Calu3 (cell line): ENCODE measurements at regions of chr4 and their contacts with region 1.

Region 1: GRCh38 chr4:13907255-13907751 is 279.8 kb upstream of the BOD1L1 start:
- DNase-seq: peak; percentile 43
- H3K4me3 Mint-ChIP-seq: peak overlapping the region; percentile 39
- H3K27ac Mint-ChIP-seq: peak overlapping the region; percentile 89
- H3K4me1 Mint-ChIP-seq: peaks cover 22% of the 10 kb centered on the region
- H3K27me3 Mint-ChIP-seq: no peaks in the 10 kb centered on the region
- CTCF ChIP-seq: peak; percentile 15

Region 2: DNA sequence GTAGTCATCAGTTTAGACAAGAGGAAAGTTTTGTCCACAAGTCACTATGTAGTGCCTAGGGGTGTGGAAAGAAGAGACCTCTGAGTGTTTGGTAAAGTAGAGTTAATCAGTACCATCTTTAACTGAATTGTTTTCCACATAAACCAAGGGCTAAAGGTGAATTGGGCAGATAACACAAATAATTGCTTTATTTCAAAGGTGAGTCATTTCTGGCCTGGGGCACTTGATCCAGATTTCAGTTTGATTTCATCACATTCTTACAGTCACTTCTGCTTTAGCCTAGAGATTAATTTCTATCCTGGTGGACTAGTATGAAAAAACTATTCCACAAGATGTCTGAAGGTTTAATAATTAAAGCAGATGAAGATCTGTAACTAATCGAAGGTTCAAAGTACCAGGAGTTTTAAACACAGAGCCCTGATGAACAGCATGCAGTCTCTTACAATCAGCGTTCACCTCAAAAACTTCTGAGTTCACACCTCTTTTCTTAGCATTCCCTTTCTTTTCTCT is 205.3 kb before region 1 on chr4:
- CTCF ChIA-PET with region 1: no interaction called
- intact Hi-C with region 1: loop called (anchors 5 kb)
- DNase-seq: peak; percentile 47
- H3K4me3 Mint-ChIP-seq: peak overlapping the region; percentile 30
- H3K27ac Mint-ChIP-seq: peak overlapping the region; percentile 85
- H3K4me1 Mint-ChIP-seq: peaks cover 32% of the 10 kb centered on the region
- H3K27me3 Mint-ChIP-seq: no peaks in the 10 kb centered on the region
- CTCF ChIP-seq: no peak

Region 3: DNA sequence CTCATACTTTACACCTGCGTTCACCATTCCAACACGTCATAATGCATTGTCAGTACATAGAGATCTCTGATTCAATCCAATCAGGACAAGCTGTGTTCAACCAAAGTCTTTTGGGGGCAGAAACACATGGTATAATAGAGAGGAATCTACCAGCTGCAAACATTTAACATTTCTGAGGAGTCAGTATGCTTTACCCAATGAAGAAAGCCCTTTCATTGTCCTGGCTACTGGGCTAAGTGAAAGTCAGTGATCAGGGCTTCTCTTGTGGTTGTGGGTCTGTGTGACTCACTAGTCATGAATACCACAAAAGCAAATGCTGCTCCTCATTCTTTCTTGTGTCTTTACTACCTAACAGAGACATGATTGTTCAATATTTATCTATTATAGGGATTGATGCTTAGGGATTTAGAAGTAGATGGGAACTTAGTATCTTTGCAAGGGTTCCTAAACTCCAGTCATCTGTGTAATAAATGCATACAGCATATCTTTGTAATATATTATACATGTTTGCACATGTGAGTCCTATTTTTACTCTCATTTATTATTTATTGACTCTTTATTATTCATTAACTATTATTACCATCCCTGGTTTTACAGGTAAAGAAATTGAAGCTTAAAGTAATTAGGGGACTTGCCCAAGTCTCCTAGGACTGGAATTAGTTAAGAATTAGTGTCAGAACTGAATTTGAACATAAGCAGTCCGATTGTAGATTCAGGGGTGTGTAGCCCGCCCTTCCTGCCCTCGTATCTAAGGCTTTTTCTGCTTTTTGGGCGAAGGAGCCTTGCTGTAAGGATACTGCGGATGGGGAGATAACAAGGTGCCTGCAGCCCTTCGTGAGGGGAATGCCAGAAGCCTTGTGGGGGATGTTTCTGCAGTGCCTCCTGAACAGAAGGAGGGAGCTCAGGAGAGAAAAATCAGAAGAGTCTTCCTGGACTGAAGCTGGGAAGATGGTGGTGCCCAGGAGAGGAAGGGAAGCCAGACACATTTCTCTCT is 73.3 kb after region 1 on chr4:
- CTCF ChIA-PET with region 1: no interaction called
- intact Hi-C with region 1: loop called (anchors 1 kb)
- DNase-seq: no peak
- H3K4me3 Mint-ChIP-seq: no peak overlapping the region
- H3K27ac Mint-ChIP-seq: peak overlapping the region; percentile 41
- H3K4me1 Mint-ChIP-seq: peaks cover 47% of the 10 kb centered on the region
- H3K27me3 Mint-ChIP-seq: no peaks in the 10 kb centered on the region
- CTCF ChIP-seq: no peak

Region 4: DNA sequence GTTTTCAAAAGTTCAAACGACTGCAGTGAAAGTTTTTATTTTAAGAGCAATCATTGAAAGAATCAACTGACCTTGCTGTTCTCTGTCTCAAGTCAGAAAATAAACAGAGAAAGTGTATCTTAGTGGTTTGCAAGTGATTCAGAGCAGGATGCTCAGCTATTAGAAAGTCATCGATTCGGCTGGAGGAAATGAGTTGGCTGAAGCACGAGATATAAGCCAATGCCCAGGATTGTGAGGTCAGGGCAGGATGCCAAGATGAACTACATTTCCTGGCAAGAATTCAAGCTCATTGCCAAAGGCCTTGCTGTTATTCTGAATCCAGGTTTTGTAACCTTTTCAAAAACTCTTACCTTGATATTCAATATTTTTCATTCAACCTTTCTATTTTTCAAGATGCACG is 261.6 kb after region 1 on chr4:
- CTCF ChIA-PET with region 1: interaction called, 4 read pairs
- intact Hi-C with region 1: loop called (anchors 5 kb)
- DNase-seq: peak; percentile 79
- H3K4me3 Mint-ChIP-seq: no peak overlapping the region
- H3K27ac Mint-ChIP-seq: no peak overlapping the region
- H3K4me1 Mint-ChIP-seq: peaks cover 16% of the 10 kb centered on the region
- H3K27me3 Mint-ChIP-seq: no peaks in the 10 kb centered on the region
- CTCF ChIP-seq: no peak

Region 5: GRCh38 chr4:14254252-14254651 is 346.9 kb after region 1 on chr4:
- CTCF ChIA-PET with region 1: no interaction called
- intact Hi-C with region 1: loop called (anchors 10 kb)
- DNase-seq: peak; percentile 46
- H3K4me3 Mint-ChIP-seq: no peak overlapping the region
- H3K27ac Mint-ChIP-seq: no peak overlapping the region
- H3K4me1 Mint-ChIP-seq: no peaks in the 10 kb centered on the region
- H3K27me3 Mint-ChIP-seq: no peaks in the 10 kb centered on the region
- CTCF ChIP-seq: no peak